Panc1 (cell line): ENCODE measurements at regions of chr6 and their contacts with region 1.

Region 1: DNA sequence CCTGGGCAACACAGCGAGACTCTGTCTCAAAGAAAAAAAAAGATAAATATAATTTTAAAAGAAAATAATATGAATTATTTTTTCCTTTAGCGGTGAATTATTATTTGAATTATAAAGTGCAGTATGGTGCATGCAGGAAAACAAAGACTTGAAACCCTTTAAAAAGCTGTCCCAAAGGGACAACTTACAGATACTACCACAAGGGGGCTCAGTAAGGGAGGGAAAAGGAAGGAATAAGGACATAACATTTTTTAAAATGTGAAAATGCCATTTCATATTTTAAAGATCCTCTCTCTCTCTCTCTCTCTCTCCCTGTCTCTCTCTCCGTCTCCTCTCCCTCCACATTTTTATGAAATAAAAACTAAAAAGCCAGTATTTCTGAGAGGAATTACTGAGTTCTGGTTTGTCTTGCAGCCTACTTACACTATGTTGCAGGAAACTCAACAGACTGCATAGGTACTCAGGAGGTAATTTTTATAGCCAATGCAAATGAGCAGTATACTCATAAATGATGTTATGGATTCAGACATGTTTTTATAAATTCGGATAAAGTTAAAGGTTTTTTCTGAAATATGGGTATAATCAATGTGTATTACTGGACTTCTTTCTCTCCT is 455.0 kb upstream of the GJE1 start:
- DNase-seq: no peak
- ATAC-seq: peak; percentile 80
- H3K4me3 ChIP-seq: no peak overlapping the region
- H3K27ac ChIP-seq: no peak overlapping the region; the same call in 1 of the 2 replicates
- H3K4me1 ChIP-seq: no peaks in the 10 kb centered on the region; the same call in 1 of the 2 replicates
- H3K27me3 ChIP-seq: no peaks in the 10 kb centered on the region
- CTCF ChIP-seq: peak; percentile 75; the same call in 1 of the 2 replicates

Region 2: GRCh38 chr6:141641406-141641805 is 36.3 kb before region 1 on chr6:
- CTCF ChIA-PET with region 1: no interaction called
- POLR2A ChIA-PET with region 1: no interaction called
- in situ Hi-C with region 1: no loop called
- intact Hi-C with region 1: loop called (anchors 1 kb)
- DNase-seq: no peak
- ATAC-seq: no peak
- H3K4me3 ChIP-seq: no peak overlapping the region
- H3K27ac ChIP-seq: no peak overlapping the region
- H3K4me1 ChIP-seq: no peaks in the 10 kb centered on the region
- H3K27me3 ChIP-seq: no peaks in the 10 kb centered on the region
- CTCF ChIP-seq: no peak

Region 3: GRCh38 chr6:142112451-142113061 is 434.9 kb after region 1 on chr6:
- CTCF ChIA-PET with region 1: interaction called, 3 read pairs
- POLR2A ChIA-PET with region 1: no interaction called
- in situ Hi-C with region 1: no loop called
- intact Hi-C with region 1: loop called (anchors 2 kb)
- DNase-seq: peak; percentile 61
- ATAC-seq: peak; percentile 74
- H3K4me3 ChIP-seq: no peak overlapping the region
- H3K27ac ChIP-seq: no peak overlapping the region
- H3K4me1 ChIP-seq: no peaks in the 10 kb centered on the region; the same call in 1 of the 2 replicates
- H3K27me3 ChIP-seq: no peaks in the 10 kb centered on the region
- CTCF ChIP-seq: peak; percentile 79; the same call in 1 of the 2 replicates